ENCODE measurements at regions of chr15 and their contacts with region 1.

Region 1: DNA sequence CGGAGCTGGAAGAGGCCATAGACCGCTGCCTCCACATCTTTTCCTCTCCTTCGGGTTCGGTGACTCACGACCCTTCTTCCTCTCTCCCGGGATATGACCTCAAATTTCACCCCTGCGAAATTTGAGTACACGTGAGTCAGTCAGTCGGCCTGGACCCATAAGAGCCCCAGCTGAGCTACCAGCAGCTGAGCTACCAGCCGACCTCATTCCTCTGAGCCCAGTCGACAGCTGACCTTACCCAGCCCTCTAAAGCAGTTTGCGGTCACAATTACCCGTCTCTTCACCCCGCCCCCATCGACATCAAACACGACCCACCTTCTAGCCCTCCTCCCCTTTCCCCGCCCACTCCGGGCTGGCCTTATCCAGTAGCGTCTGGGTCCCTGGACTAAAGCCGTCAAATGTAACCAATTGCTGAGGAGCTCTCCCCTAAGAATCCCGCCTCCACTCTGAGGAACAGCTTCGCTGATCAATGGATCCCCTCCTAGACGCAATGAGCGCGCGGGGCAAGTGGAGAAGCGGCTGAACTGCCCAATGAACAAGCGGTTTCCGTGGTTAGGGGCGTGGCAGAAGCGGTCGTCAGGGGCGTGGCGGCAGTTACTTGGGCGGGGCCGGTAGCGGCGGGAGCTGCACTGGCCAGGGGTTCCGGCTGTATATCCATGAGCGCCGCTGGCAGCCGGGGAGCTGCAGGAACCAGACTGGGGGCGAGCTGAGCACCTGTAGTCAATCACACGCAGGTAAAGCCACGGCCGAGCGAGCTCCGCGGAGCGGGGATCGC is at the start of gene ABHD2:
- DNase-seq: peak; percentile 100
- H3K4me3 ChIP-seq: peak within 1 kb of the TSS; percentile 94
- H3K27ac ChIP-seq: peak within 1 kb of the TSS; percentile 71
- H3K4me1 ChIP-seq: peaks cover 32% of the 10 kb centered on the region
- H3K27me3 ChIP-seq: no peaks in the 10 kb centered on the region
- CTCF ChIP-seq: no peak
- total RNA-seq, gene ABHD2: 43.9 and 52.4 TPM in 2 replicates

Region 2: DNA sequence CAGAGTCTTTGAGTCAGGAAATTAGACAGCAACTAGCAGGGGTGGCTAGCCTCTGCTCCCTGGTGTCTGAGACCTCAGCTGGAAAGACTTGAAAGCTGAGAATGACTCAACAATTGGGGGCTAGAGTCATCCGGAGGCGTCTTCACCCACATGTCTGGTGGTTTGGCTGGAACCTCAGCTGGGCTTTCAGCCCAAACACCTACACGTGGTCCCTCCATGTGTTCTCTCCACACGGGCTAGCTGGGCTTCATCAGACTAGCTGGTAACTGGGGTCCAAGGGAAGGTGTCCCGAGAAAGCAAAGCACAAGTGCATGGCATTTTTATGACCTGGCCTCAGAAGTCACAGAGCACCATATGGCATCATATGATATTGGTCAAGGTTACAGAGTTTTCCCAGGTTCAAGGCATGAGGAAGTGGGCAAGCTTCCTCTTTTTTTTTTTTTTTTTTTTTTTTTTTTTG is 19.7 kb before region 1 on chr15:
- CTCF ChIA-PET with region 1: interaction called, 10 read pairs
- POLR2A ChIA-PET with region 1: no interaction called
- intact Hi-C with region 1: no loop called
- DNase-seq: peak; percentile 11
- H3K4me3 ChIP-seq: no peak overlapping the region
- H3K27ac ChIP-seq: no peak overlapping the region
- H3K4me1 ChIP-seq: no peaks in the 10 kb centered on the region
- H3K27me3 ChIP-seq: no peaks in the 10 kb centered on the region
- CTCF ChIP-seq: no peak

Region 3: DNA sequence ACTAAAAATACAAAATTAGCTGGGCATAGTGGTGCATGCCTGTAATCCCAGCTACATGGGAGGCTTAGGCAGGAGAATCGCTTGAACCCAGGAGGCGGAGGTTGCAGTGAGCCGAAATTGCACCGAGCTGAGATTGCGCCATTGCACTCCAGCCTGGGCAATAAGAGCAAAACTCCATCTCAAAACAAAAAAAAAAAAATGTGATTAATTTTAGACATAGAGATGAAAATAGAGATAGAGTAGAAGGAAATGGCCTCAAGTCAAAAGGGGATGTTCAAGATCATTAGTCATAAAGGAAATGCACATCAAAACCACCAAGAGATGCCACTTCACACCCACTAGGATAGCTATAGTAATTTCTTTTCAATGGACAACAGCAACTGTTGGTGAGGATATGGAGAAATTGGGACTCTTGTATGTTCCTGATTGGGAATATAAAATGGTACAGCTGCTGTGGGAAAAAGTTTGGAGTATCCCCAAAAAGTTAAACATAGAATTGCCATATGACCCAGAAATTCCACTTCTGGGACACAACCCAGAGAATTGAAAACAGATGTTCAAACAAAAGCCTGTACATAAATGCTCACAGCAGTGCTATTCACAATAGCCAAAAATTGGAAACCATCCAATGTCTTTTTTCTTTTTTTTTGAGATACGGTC is 55.6 kb after region 1 on chr15:
- CTCF ChIA-PET with region 1: no interaction called
- POLR2A ChIA-PET with region 1: no interaction called
- intact Hi-C with region 1: loop called (anchors 5 kb)
- DNase-seq: peak; percentile 93
- H3K4me3 ChIP-seq: no peak overlapping the region
- H3K27ac ChIP-seq: no peak overlapping the region
- H3K4me1 ChIP-seq: peaks cover 37% of the 10 kb centered on the region
- H3K27me3 ChIP-seq: no peaks in the 10 kb centered on the region
- CTCF ChIP-seq: no peak

Measured in A673 (cell line).